ENCODE measurements at regions of chr2 and their contacts with region 1.

Region 1: GRCh38 chr2:135164441-135164840 is 112.3 kb downstream of the RAB3GAP1 start:
- DNase-seq: no peak
- ATAC-seq: no peak
- H3K4me3 ChIP-seq: no peak overlapping the region
- H3K27ac ChIP-seq: no peak overlapping the region
- H3K4me1 ChIP-seq: no peaks in the 10 kb centered on the region
- H3K27me3 ChIP-seq: no peaks in the 10 kb centered on the region
- CTCF ChIP-seq: no peak
- POLR2A ChIP-seq: no peak

Region 2: DNA sequence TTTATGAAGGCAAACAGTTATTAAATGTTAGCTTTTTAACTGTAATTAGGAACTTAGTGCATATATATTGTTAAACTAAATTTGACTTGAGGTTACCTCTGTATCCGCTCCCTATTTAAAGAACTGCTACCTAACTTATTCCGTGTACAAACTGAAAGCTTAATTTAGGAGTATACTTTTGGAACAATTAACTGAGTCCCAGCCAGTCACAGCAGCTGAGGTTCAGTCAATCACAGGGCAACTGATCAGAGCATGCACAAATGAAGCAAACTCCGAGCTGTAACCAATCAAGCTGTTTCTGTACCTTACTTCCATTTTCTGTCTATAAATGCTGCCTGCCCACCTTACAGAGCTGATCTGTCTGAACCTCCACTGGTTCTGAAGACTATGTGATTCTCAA is 51.1 kb before region 1 on chr2:
- intact Hi-C with region 1: no loop called
- DNase-seq: no peak
- ATAC-seq: no peak
- H3K4me3 ChIP-seq: no peak overlapping the region
- H3K27ac ChIP-seq: no peak overlapping the region
- H3K4me1 ChIP-seq: no peaks in the 10 kb centered on the region
- H3K27me3 ChIP-seq: no peaks in the 10 kb centered on the region
- CTCF ChIP-seq: no peak
- POLR2A ChIP-seq: no peak

Region 3: GRCh38 chr2:135762022-135762421 is 597.6 kb after region 1 on chr2:
- intact Hi-C with region 1: loop called in 1 of 10 experiments (anchors 10 kb)
- DNase-seq: no peak
- ATAC-seq: no peak
- H3K4me3 ChIP-seq: no peak overlapping the region
- H3K27ac ChIP-seq: no peak overlapping the region
- H3K4me1 ChIP-seq: no peaks in the 10 kb centered on the region
- H3K27me3 ChIP-seq: no peaks in the 10 kb centered on the region
- CTCF ChIP-seq: no peak
- POLR2A ChIP-seq: no peak

Region 4: GRCh38 chr2:135882415-135882814 is 718.0 kb after region 1 on chr2:
- intact Hi-C with region 1: no loop called
- DNase-seq: no peak
- ATAC-seq: no peak
- H3K4me3 ChIP-seq: no peak overlapping the region
- H3K27ac ChIP-seq: no peak overlapping the region
- H3K4me1 ChIP-seq: no peaks in the 10 kb centered on the region
- H3K27me3 ChIP-seq: peaks cover 0 to 5% (median 0%) of the 10 kb centered on the region in 9 donors
- CTCF ChIP-seq: no peak
- POLR2A ChIP-seq: no peak